ENCODE measurements at regions of chr17 and their contacts with region 1.

Region 1: GRCh38 chr17:27601069-27601975 is 29.7 kb upstream of the LGALS9 start:
- DNase-seq: peak; percentile 53 to 81 (median 68)
- ATAC-seq: peak; percentile 75
- H3K4me3 ChIP-seq: no peak overlapping the region
- H3K4me3 Mint-ChIP-seq: no peak overlapping the region
- H3K27ac ChIP-seq: no peak overlapping the region
- H3K27ac Mint-ChIP-seq: no peak overlapping the region
- H3K4me1 ChIP-seq: no peaks in the 10 kb centered on the region
- H3K4me1 Mint-ChIP-seq: peaks cover 0 to 22% (median 3%) of the 10 kb centered on the region in 7 donors
- H3K27me3 ChIP-seq: no peaks in the 10 kb centered on the region
- H3K27me3 Mint-ChIP-seq: no peaks in the 10 kb centered on the region

Region 2: DNA sequence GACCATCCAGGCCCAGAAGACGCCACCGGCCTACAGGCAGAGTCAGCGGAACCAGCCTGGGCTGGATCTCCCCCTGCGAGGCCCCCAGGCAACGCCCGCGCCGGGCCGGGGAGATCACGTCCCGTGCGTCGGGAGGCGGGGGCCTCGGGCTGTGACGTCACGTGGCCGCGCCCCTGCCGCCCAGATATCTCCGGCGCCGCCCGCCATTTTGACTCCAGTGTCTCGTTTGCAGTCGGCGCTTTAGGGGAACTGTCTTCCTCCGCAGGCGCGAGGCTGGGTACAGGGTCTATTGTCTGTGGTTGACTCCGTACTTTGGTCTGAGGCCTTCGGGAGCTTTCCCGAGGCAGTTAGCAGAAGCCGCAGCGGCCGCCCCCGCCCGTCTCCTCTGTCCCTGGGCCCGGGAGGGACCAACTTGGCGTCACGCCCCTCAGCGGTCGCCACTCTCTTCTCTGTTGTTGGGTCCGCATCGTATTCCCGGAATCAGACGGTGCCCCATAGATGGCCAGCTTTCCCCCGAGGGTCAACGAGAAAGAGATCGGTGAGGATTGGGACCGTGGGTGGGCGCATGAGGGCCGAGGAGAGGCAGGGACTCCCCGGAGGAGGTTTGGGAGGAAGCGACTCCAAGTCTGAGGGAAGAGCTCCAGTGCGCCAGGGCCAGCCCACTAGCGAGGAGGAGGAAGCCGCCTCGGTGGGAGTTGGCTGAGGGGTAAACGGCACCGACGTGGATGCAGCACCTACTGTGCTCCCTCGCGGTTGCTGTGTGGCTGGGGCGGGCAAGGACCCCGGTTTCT is 307.2 kb before region 1 on chr17 and contains the start of gene WSB1:
- CTCF ChIA-PET with region 1: interaction called, 3 read pairs
- POLR2A ChIA-PET with region 1: no interaction called
- intact Hi-C with region 1: loop called (anchors 1 to 2 kb)
- DNase-seq: peak; percentile 91 to 96 (median 94)
- ATAC-seq: peak; percentile 94
- H3K4me3 ChIP-seq: peak within 1 kb of the TSS; percentile 99
- H3K4me3 Mint-ChIP-seq: peak within 1 kb of the TSS; percentile 90 to 100 (median 96)
- H3K27ac ChIP-seq: peak within 1 kb of the TSS; percentile 96
- H3K27ac Mint-ChIP-seq: peak within 1 kb of the TSS; percentile 94 to 100 (median 99)
- H3K4me1 ChIP-seq: peaks cover 19 to 34% of the 10 kb centered on the region in 2 donors
- H3K4me1 Mint-ChIP-seq: peaks cover 21 to 51% (median 43%) of the 10 kb centered on the region in 7 donors
- H3K27me3 ChIP-seq: no peaks in the 10 kb centered on the region
- H3K27me3 Mint-ChIP-seq: no peaks in the 10 kb centered on the region
- total RNA-seq, gene WSB1: 110 to 185 (median 134) TPM

Region 3: GRCh38 chr17:27324771-27325339 is 276.5 kb before region 1 on chr17:
- CTCF ChIA-PET with region 1: no interaction called
- POLR2A ChIA-PET with region 1: no interaction called
- intact Hi-C with region 1: no loop called
- DNase-seq: no peak
- ATAC-seq: no peak
- H3K4me3 ChIP-seq: no peak overlapping the region
- H3K4me3 Mint-ChIP-seq: no peak overlapping the region
- H3K27ac ChIP-seq: no peak overlapping the region
- H3K27ac Mint-ChIP-seq: no peak overlapping the region
- H3K4me1 ChIP-seq: no peaks in the 10 kb centered on the region
- H3K4me1 Mint-ChIP-seq: peaks cover 0 to 11% (median 0%) of the 10 kb centered on the region in 7 donors
- H3K27me3 ChIP-seq: no peaks in the 10 kb centered on the region
- H3K27me3 Mint-ChIP-seq: peaks cover 0 to 3% (median 0%) of the 10 kb centered on the region in 5 donors

Region 4: DNA sequence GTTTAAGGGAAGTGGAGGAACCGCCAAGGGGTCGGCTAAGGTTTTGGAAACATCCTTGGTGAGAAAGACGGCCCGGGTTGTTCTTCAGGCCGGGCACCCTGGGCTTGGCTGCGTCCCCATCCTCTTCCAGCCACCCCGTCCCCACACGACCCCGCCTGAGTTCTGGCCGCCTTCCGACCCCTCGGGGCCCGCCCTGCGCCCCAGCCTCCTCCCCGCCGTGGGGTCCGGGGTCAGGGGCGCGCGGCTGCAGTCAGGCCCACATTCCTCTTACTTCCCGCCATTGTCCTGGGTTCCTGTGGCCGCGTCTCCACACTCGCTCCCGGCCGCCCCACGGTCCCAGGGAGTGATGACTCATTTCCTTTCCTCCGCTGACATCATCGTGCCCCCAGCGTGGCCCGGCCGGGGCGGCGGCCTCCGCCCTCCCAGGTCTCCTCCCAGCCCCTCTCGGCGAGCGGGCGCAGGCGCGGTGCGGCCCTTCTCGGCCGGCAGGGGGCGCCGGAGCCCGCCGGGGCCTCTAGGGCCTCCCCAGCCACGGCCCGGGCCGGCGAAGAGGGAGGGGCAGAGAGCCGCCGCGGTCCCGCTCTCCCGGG is 247.8 kb before region 1 on chr17:
- CTCF ChIA-PET with region 1: interaction called, 18 read pairs
- POLR2A ChIA-PET with region 1: interaction called, 4 read pairs
- intact Hi-C with region 1: loop called (anchors 1 kb)
- DNase-seq: peak; percentile 68 to 95 (median 77)
- ATAC-seq: peak; percentile 96
- H3K4me3 ChIP-seq: peak overlapping the region; percentile 85
- H3K4me3 Mint-ChIP-seq: peak overlapping the region; percentile 30 to 93 (median 78)
- H3K27ac ChIP-seq: peak overlapping the region; percentile 83
- H3K27ac Mint-ChIP-seq: peak overlapping the region; percentile 46 to 94 (median 79)
- H3K4me1 ChIP-seq: peaks cover 3 to 12% of the 10 kb centered on the region in 2 donors
- H3K4me1 Mint-ChIP-seq: peaks cover 12 to 31% (median 21%) of the 10 kb centered on the region in 7 donors
- H3K27me3 ChIP-seq: no peaks in the 10 kb centered on the region
- H3K27me3 Mint-ChIP-seq: no peaks in the 10 kb centered on the region

Region 5: DNA sequence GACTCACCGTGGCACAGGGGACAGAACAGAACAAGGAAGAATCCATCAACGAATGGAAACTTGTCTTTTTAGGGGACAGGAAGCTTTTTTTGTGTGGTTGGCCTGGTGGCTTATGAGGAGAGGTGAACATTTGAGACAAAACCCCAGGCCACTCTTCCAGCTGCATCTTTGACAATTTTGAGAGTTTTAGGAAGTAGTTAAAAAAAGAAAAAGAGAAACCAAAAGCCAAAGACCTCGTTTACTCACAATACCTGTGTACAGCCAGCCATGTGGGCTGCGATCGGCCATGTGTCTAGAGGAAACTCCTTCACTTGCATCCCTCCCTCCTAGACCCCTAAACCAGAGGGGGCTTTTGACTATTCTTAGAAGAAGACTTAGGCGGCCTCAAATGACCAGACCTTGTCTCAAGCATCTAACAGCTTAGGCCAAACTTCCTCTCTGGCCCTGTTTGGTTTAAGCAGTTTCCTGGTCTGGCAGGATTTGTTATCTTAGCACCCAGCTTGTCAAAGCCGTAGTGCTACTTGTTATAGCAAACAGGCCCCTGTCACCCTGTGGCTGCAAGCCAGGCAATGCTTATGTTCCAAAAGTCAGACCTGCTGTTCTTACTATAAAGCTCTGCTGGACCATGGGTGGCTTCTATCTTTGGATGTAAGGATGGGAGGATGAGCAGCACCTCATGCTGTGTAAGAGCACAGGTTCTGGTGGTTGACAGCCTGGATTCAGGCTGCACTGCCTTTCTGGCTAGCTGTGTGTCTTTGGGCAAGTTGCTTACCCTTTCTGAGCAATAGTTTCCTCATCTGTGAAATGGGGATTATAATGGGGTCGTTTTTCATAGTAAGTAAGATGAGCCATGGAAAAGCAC is 127.3 kb before region 1 on chr17:
- CTCF ChIA-PET with region 1: no interaction called
- POLR2A ChIA-PET with region 1: no interaction called
- intact Hi-C with region 1: loop called in 1 of 2 experiments (anchors 5 kb)
- DNase-seq: peak in 6 of 9 donors; percentile 12 to 76 (median 18)
- ATAC-seq: peak; percentile 85
- H3K4me3 ChIP-seq: peak overlapping the region; percentile 11
- H3K4me3 Mint-ChIP-seq: peak overlapping the region; percentile 16 to 86 (median 64)
- H3K27ac ChIP-seq: peak overlapping the region; percentile 43
- H3K27ac Mint-ChIP-seq: peak overlapping the region; percentile 76 to 97 (median 89)
- H3K4me1 ChIP-seq: peaks cover 19 to 44% of the 10 kb centered on the region in 2 donors
- H3K4me1 Mint-ChIP-seq: peaks cover 41 to 89% (median 49%) of the 10 kb centered on the region in 7 donors
- H3K27me3 ChIP-seq: no peaks in the 10 kb centered on the region
- H3K27me3 Mint-ChIP-seq: no peaks in the 10 kb centered on the region

Region 6: DNA sequence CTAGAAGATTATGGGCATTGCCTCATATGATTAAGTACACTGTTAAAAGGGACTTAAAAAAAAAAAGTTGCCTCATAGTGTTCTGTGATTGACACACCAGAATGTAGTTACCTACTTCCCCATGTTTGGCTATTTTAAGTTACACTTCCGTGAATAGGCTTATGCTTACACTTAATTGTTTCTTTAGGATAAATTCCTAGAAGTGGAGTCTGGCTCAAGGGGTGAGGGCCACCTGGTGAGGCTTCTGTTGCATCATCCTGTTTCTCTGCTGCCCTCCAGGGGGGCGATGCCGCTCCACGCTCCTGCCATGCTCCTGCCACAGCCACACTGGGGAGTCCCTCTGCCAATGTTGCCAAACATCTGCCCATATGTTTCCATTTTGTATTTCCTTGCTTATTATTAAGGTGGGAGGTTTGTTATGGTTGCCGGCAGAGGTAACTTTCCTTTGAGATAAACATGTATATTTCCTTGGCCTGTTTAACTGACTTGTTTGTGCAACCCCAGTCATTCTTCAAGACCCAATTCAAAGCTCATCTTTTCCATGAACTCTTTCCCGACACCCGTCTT is 72.0 kb before region 1 on chr17:
- CTCF ChIA-PET with region 1: no interaction called
- POLR2A ChIA-PET with region 1: no interaction called
- intact Hi-C with region 1: no loop called
- DNase-seq: no peak
- ATAC-seq: peak; percentile 37
- H3K4me3 ChIP-seq: no peak overlapping the region
- H3K4me3 Mint-ChIP-seq: peak overlapping the region in 1 of 10 donors; percentile 29
- H3K27ac ChIP-seq: no peak overlapping the region
- H3K27ac Mint-ChIP-seq: peak overlapping the region in 1 of 9 donors; percentile 66
- H3K4me1 ChIP-seq: no peaks in the 10 kb centered on the region
- H3K4me1 Mint-ChIP-seq: peaks cover 13 to 84% (median 25%) of the 10 kb centered on the region in 7 donors
- H3K27me3 ChIP-seq: no peaks in the 10 kb centered on the region
- H3K27me3 Mint-ChIP-seq: no peaks in the 10 kb centered on the region

Region 7: DNA sequence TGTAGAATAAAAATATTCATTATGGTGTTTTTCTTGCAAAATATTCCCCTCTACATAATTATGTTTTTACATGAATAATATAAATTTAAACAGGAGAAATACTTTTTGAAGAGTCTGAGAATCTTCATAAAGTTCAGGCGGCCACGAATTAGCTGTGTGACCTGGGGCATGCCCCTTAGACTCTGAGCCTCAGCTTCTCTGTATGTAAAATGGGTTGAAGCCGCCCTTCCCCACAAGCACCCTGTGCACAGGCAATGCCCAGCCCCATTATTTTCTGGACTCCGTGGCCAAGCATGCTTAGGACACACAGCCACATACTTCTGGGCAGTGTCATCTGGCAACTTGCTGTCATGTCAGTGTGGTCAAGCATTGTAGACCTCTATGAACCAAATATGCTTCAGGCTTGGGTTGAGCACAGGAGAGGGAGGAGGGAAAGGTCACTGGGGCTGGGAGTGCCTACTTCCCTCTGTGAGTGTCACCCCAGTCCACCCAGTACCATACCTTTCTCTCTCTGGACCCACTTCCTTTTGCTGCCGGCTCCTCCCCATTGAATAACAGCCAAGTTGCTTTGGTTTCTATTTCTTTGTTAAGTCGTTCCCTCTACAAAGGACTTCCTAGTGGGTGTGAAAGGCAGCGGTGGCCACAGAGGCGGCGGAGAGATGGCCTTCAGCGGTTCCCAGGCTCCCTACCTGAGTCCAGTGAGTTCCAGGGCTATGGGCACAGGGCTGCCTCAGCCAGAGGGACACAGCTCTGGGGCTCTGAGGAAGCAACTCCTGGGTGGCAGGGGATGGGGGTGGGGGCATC is 29.5 kb after region 1 on chr17 and contains the start of gene LGALS9:
- CTCF ChIA-PET with region 1: interaction called, 3 read pairs
- POLR2A ChIA-PET with region 1: no interaction called
- intact Hi-C with region 1: loop called in 1 of 2 experiments (anchors 2 kb)
- DNase-seq: peak in 8 of 9 donors; percentile 23 to 55 (median 46)
- ATAC-seq: peak; percentile 74
- H3K4me3 ChIP-seq: peak within 1 kb of the TSS; percentile 91
- H3K4me3 Mint-ChIP-seq: peak within 1 kb of the TSS; percentile 88 to 96 (median 93)
- H3K27ac ChIP-seq: peak within 1 kb of the TSS; percentile 69
- H3K27ac Mint-ChIP-seq: peak within 1 kb of the TSS; percentile 84 to 98 (median 92)
- H3K4me1 ChIP-seq: peaks cover 13 to 18% of the 10 kb centered on the region in 2 donors
- H3K4me1 Mint-ChIP-seq: peaks cover 36 to 56% (median 53%) of the 10 kb centered on the region in 7 donors
- H3K27me3 ChIP-seq: no peaks in the 10 kb centered on the region
- H3K27me3 Mint-ChIP-seq: no peaks in the 10 kb centered on the region
- total RNA-seq, gene LGALS9: 11.0 to 198 (median 47.7) TPM

Region 8: DNA sequence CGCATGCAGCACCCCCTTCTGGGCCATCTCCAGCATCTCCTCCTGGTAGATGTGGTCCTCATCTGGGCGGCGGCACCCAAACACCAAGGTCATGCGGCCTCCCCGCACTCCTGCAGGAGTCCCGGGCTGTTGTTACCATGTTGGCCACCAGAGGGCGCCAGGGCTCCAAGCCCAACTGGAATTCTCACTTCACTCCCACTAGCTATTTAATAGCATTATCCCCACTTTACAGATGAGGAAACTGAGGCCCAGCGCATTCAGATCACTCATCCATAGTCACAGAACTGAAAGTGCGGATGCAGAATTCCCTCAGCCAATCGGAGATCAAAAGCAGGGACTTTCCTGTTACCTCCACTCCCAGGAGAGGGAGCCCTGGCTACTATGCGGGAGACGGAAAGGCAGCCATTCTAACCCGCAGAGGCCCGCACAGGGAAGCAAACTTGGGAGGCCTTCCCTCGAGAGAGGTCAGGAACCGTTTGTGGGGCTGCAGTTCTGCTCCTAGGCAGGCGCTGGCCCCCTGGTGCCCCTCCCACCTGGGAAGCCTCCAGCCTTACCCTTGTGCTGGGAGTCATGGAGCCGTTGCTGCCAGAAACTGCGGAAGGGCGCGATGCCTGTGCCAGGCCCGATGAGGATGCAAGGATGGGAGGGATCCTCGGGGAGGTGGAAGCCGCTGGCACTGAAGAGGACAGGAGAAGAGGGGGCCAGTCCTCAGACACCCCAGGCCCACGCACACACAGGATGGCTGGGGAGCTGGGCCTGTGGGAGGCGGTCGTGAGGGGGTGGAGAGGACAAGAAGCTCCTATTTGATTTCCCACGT is 159.0 kb after region 1 on chr17:
- CTCF ChIA-PET with region 1: no interaction called
- POLR2A ChIA-PET with region 1: no interaction called
- intact Hi-C with region 1: loop called (anchors 2 kb)
- DNase-seq: peak; percentile 28 to 77 (median 59)
- ATAC-seq: peak; percentile 73
- H3K4me3 ChIP-seq: no peak overlapping the region
- H3K4me3 Mint-ChIP-seq: no peak overlapping the region
- H3K27ac ChIP-seq: no peak overlapping the region
- H3K27ac Mint-ChIP-seq: no peak overlapping the region
- H3K4me1 ChIP-seq: no peaks in the 10 kb centered on the region
- H3K4me1 Mint-ChIP-seq: peaks cover 0 to 7% (median 0%) of the 10 kb centered on the region in 7 donors
- H3K27me3 ChIP-seq: no peaks in the 10 kb centered on the region
- H3K27me3 Mint-ChIP-seq: no peaks in the 10 kb centered on the region